ENCODE measurements at regions of chr15 and their contacts with region 1.

Region 1: GRCh38 chr15:89087830-89088604 is at the start of gene ABHD2:
- DNase-seq: peak; percentile 99
- ATAC-seq: peak; percentile 90
- H3K4me3 ChIP-seq: peak within 1 kb of the TSS; percentile 87
- H3K27ac ChIP-seq: peak within 1 kb of the TSS; percentile 80
- H3K4me1 ChIP-seq: peaks cover 45% of the 10 kb centered on the region
- H3K27me3 ChIP-seq: no peaks in the 10 kb centered on the region
- CTCF ChIP-seq: no peak
- total RNA-seq, gene ABHD2: 31.4 and 34.0 TPM in 2 replicates

Region 2: GRCh38 chr15:88638626-88639372 is 449.2 kb before region 1 on chr15 and contains the start of gene ISG20:
- CTCF ChIA-PET with region 1: no interaction called
- POLR2A ChIA-PET with region 1: interaction called, 25 read pairs
- intact Hi-C with region 1: no loop called
- DNase-seq: peak; percentile 97
- ATAC-seq: peak; percentile 89
- H3K4me3 ChIP-seq: peak within 1 kb of the TSS; percentile 67
- H3K27ac ChIP-seq: peak within 1 kb of the TSS; percentile 100
- H3K4me1 ChIP-seq: peaks cover 49% of the 10 kb centered on the region
- H3K27me3 ChIP-seq: no peaks in the 10 kb centered on the region
- CTCF ChIP-seq: peak; percentile 43
- total RNA-seq, gene ISG20: 48.6 and 64.0 TPM in 2 replicates

Region 3: GRCh38 chr15:88995449-88995848 is 92.6 kb before region 1 on chr15:
- CTCF ChIA-PET with region 1: no interaction called
- POLR2A ChIA-PET with region 1: no interaction called
- intact Hi-C with region 1: no loop called
- DNase-seq: no peak
- ATAC-seq: 0 out of 2 replicates have a peak, but pooled peaks have one; percentile 35
- H3K4me3 ChIP-seq: no peak overlapping the region
- H3K27ac ChIP-seq: no peak overlapping the region
- H3K4me1 ChIP-seq: no peaks in the 10 kb centered on the region
- H3K27me3 ChIP-seq: no peaks in the 10 kb centered on the region
- CTCF ChIP-seq: no peak

Region 4: GRCh38 chr15:89023311-89023961 is 64.6 kb before region 1 on chr15:
- CTCF ChIA-PET with region 1: no interaction called
- POLR2A ChIA-PET with region 1: no interaction called
- intact Hi-C with region 1: no loop called
- DNase-seq: no peak
- ATAC-seq: no peak
- H3K4me3 ChIP-seq: no peak overlapping the region
- H3K27ac ChIP-seq: no peak overlapping the region
- H3K4me1 ChIP-seq: no peaks in the 10 kb centered on the region
- H3K27me3 ChIP-seq: no peaks in the 10 kb centered on the region
- CTCF ChIP-seq: no peak

Region 5: DNA sequence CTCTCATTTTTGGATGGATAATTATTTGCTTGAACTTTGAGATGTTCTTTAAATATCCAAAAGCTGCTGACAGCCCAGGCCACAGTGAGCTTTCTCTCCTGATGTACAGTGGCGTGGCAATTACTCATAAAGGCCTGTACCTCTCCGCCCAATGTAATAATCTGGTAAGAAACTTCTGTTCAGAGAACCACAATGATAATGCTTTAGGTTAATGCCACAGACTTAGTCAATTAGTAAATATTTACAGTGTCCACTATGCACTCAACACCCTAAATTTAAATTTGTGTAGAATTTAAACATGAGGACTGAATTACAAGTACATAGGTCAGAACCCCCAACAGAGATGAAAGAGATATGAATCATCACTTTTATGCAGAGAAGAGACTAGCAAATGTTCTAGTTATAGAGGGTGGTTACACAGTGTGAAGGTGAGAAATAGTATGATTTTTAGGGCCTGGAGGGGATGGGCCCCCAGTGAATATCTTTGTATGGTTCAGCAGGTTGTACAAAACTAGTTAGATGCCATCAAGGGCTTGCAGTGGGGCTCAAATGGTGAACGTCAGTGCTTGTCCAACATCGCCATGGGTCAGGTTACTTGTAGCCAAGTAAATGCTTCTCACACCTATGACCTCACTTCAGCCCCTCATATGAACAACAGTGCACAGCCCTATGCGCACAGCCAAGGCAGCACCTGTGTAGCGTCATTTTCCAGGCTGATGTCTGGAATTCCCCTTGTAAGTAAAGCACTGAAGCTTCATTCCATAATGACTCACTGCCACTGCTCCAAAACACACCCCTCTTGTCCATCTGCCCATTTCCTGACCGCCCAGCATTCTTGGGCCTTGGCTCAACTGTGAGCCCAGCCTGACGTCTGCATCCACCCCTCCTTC is 13.5 kb after region 1 on chr15:
- CTCF ChIA-PET with region 1: interaction called, 3 read pairs
- POLR2A ChIA-PET with region 1: interaction called, 15 read pairs
- intact Hi-C with region 1: loop called (anchors 1 kb)
- DNase-seq: peak; percentile 95
- ATAC-seq: peak; percentile 79
- H3K4me3 ChIP-seq: peak overlapping the region; percentile 49
- H3K27ac ChIP-seq: peak overlapping the region; percentile 98
- H3K4me1 ChIP-seq: peaks cover 85% of the 10 kb centered on the region
- H3K27me3 ChIP-seq: no peaks in the 10 kb centered on the region
- CTCF ChIP-seq: no peak

Region 6: DNA sequence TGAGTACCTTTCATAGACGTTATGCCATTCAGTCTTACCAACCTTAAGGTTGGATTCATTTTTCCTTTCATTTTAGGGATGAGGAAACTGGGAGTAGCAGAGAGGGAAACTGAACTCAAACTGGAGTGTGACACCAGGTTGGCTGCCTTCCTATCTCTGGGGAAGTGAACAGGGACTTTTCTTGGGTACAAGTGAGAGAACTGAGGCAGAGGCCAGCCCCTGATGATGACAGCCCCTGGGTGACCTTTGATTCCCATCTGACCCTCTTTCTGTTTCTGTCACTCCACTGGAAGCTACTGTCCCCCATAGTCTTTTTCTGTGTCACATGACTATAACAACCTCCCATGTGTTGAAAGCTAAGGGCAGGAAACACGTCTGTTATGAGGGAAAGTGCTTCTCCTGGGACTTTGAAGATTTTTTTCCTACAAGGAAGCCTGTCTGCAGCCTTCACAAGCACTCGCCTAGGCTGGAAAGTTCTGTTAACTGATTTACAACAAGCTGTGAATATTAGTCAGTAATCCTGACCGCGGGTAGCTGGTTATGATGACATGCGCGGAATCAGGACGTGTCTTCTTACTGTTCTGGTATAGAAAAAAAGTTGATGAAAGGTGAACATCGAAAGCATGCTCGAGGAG is 31.6 kb after region 1 on chr15:
- CTCF ChIA-PET with region 1: no interaction called
- POLR2A ChIA-PET with region 1: interaction called, 27 read pairs
- intact Hi-C with region 1: no loop called
- DNase-seq: peak; percentile 85
- ATAC-seq: peak; percentile 67
- H3K4me3 ChIP-seq: peak overlapping the region; percentile 42
- H3K27ac ChIP-seq: peak overlapping the region; percentile 99
- H3K4me1 ChIP-seq: peaks cover 72% of the 10 kb centered on the region
- H3K27me3 ChIP-seq: no peaks in the 10 kb centered on the region
- CTCF ChIP-seq: no peak

Region 7: GRCh38 chr15:89129123-89129815 is 41.3 kb after region 1 on chr15:
- CTCF ChIA-PET with region 1: no interaction called
- POLR2A ChIA-PET with region 1: interaction called, 3 read pairs
- intact Hi-C with region 1: loop called (anchors 5 kb)
- DNase-seq: peak; percentile 40
- ATAC-seq: peak; percentile 22; the same call in 1 of the 2 replicates
- H3K4me3 ChIP-seq: no peak overlapping the region
- H3K27ac ChIP-seq: peak overlapping the region; percentile 35
- H3K4me1 ChIP-seq: peaks cover 41% of the 10 kb centered on the region
- H3K27me3 ChIP-seq: no peaks in the 10 kb centered on the region
- CTCF ChIP-seq: peak; percentile 92

Region 8: DNA sequence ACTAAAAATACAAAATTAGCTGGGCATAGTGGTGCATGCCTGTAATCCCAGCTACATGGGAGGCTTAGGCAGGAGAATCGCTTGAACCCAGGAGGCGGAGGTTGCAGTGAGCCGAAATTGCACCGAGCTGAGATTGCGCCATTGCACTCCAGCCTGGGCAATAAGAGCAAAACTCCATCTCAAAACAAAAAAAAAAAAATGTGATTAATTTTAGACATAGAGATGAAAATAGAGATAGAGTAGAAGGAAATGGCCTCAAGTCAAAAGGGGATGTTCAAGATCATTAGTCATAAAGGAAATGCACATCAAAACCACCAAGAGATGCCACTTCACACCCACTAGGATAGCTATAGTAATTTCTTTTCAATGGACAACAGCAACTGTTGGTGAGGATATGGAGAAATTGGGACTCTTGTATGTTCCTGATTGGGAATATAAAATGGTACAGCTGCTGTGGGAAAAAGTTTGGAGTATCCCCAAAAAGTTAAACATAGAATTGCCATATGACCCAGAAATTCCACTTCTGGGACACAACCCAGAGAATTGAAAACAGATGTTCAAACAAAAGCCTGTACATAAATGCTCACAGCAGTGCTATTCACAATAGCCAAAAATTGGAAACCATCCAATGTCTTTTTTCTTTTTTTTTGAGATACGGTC is 55.6 kb after region 1 on chr15:
- CTCF ChIA-PET with region 1: no interaction called
- POLR2A ChIA-PET with region 1: no interaction called
- intact Hi-C with region 1: no loop called
- DNase-seq: peak; percentile 40
- ATAC-seq: peak; percentile 65
- H3K4me3 ChIP-seq: no peak overlapping the region
- H3K27ac ChIP-seq: peak overlapping the region; percentile 27
- H3K4me1 ChIP-seq: peaks cover 16% of the 10 kb centered on the region
- H3K27me3 ChIP-seq: no peaks in the 10 kb centered on the region
- CTCF ChIP-seq: no peak

Region 9: GRCh38 chr15:89171136-89172072 is 83.4 kb after region 1 on chr15:
- CTCF ChIA-PET with region 1: interaction called, 3 read pairs
- POLR2A ChIA-PET with region 1: interaction called, 11 read pairs
- intact Hi-C with region 1: loop called (anchors 2 kb)
- DNase-seq: peak; percentile 77
- ATAC-seq: no peak
- H3K4me3 ChIP-seq: no peak overlapping the region
- H3K27ac ChIP-seq: no peak overlapping the region
- H3K4me1 ChIP-seq: peaks cover 29% of the 10 kb centered on the region
- H3K27me3 ChIP-seq: no peaks in the 10 kb centered on the region
- CTCF ChIP-seq: peak; percentile 90

Region 10: DNA sequence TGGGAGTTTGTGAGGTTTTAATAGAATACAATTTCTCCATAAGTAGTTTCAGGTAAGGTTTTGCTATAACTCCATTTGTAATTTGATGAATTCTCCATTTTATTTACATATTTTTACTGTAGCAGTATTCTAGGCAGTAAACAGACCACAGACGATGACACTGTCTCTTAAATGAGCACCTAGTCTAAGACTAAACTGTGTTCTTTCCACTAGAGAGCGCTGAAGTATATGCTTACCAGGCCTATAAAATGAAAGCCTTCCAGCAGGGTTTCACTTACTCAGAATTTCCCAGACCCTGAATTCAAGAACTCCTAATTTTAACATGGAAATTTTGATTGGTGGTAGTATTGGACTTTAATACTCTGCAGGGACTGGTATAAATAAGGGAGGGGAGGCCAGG is 205.0 kb after region 1 on chr15:
- CTCF ChIA-PET with region 1: no interaction called
- POLR2A ChIA-PET with region 1: no interaction called
- intact Hi-C with region 1: no loop called
- DNase-seq: no peak
- ATAC-seq: no peak
- H3K4me3 ChIP-seq: no peak overlapping the region
- H3K27ac ChIP-seq: no peak overlapping the region
- H3K4me1 ChIP-seq: no peaks in the 10 kb centered on the region
- H3K27me3 ChIP-seq: no peaks in the 10 kb centered on the region
- CTCF ChIP-seq: peak; percentile 32; the same call in 1 of the 2 replicates